HepG2 (cell line): ENCODE measurements at regions of chr11 and their contacts with region 1.

Region 1: GRCh38 chr11:61361686-61362541 is at the starts of genes CYB561A3 and TMEM138:
- DNase-seq: peak; percentile 89
- ATAC-seq: peak; percentile 96
- H3K4me3 ChIP-seq: peak within 1 kb of the TSS; percentile 74 to 80 (median 80)
- H3K27ac ChIP-seq: peak within 1 kb of the TSS; percentile 98
- H3K4me1 ChIP-seq: peaks cover 36% of the 10 kb centered on the region
- H3K27me3 ChIP-seq: no peaks in the 10 kb centered on the region; a peak in 1 of 5 replicates
- CTCF ChIP-seq: 0 out of 2 replicates have a peak, but pooled peaks have one; percentile 15
- EP300 ChIP-seq: no peak; a peak in 1 of 4 replicates
- POLR2A ChIP-seq: peak; percentile 87 to 92
- RAD21 ChIP-seq: no peak; the same call in 1 of the 2 replicates
- total RNA-seq, gene CYB561A3: 11.5 and 14.9 TPM in 2 replicates
- total RNA-seq, gene TMEM138: 29.7 and 43.5 TPM in 2 replicates

Region 2: DNA sequence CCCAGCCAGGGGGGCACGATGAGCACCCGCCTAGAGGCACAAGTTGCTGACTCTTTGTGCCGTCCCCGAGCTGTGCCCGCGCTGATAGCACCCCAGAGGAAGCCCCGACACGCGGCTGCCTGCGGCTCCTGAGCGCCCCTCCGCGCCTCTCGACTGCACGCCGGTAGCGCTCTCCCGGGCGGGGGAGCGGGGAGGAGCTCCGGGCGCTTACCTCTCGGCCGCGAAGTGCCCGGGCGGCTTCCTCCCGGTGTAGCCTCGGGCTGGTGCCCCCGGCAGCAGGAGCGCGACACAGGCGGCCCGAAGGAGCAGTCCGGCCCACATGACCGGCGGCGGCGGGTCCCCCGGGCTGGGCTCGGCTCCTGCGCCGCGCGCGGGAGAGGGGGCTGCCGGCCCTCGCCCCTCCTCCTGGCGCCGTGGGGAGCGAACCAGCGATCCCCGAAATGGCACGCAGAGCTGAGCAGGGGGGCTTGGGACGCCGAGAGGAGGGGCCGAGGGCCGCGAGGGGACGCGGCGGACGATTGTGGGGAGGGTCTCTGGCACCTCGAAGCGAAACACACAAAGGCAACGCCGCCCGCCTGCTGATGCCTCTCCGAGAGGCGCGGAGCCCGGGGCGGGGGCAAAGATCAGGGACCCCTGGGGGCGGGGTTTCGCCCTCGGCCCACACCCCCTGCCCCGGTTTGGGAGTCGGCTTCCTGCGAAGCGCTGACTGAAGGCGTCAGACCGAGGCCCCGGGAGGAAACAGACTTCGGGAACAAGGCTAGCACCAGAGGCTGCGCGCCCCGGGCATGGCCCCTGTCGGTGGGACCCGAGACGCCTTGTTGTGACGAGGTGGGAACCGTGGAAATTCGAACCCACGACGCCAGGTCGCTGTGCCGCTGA is 67.0 kb before region 1 on chr11 and contains the start of gene VWCE:
- CTCF ChIA-PET with region 1: no interaction called
- POLR2A ChIA-PET with region 1: interaction called, 17 read pairs
- in situ Hi-C with region 1: no loop called
- intact Hi-C with region 1: no loop called
- DNase-seq: peak; percentile 76
- ATAC-seq: peak; percentile 73
- H3K4me3 ChIP-seq: peak within 1 kb of the TSS; percentile 67 to 88 (median 83)
- H3K27ac ChIP-seq: peak within 1 kb of the TSS; percentile 94
- H3K4me1 ChIP-seq: peaks cover 74% of the 10 kb centered on the region
- H3K27me3 ChIP-seq: no peaks in the 10 kb centered on the region; a peak in 1 of 5 replicates
- CTCF ChIP-seq: peak; percentile 65
- EP300 ChIP-seq: no peak
- POLR2A ChIP-seq: peak; percentile 77 to 98
- RAD21 ChIP-seq: no peak; the same call in 1 of the 2 replicates
- total RNA-seq, gene VWCE: 10.4 and 27.6 TPM in 2 replicates

Region 3: GRCh38 chr11:61347916-61348461 is 13.9 kb before region 1 on chr11:
- CTCF ChIA-PET with region 1: no interaction called
- POLR2A ChIA-PET with region 1: interaction called, 26 read pairs
- in situ Hi-C with region 1: no loop called
- intact Hi-C with region 1: no loop called
- DNase-seq: no peak
- ATAC-seq: peak; percentile 23
- H3K4me3 ChIP-seq: no peak overlapping the region
- H3K27ac ChIP-seq: peak overlapping the region; percentile 22
- H3K4me1 ChIP-seq: no peaks in the 10 kb centered on the region
- H3K27me3 ChIP-seq: no peaks in the 10 kb centered on the region
- CTCF ChIP-seq: no peak
- EP300 ChIP-seq: no peak
- POLR2A ChIP-seq: peak in 1 of 2 experiments; percentile 25; a peak in 1 of 4 replicates
- RAD21 ChIP-seq: no peak

Region 4: GRCh38 chr11:61378713-61379313 is 16.9 kb after region 1 on chr11:
- CTCF ChIA-PET with region 1: no interaction called
- POLR2A ChIA-PET with region 1: interaction called, 14 read pairs
- in situ Hi-C with region 1: no loop called
- intact Hi-C with region 1: no loop called
- DNase-seq: peak; percentile 49
- ATAC-seq: peak; percentile 87
- H3K4me3 ChIP-seq: no peak overlapping the region
- H3K27ac ChIP-seq: peak overlapping the region; percentile 11
- H3K4me1 ChIP-seq: peaks cover 10% of the 10 kb centered on the region
- H3K27me3 ChIP-seq: no peaks in the 10 kb centered on the region
- CTCF ChIP-seq: no peak
- EP300 ChIP-seq: no peak
- POLR2A ChIP-seq: no peak
- RAD21 ChIP-seq: no peak

Region 5: GRCh38 chr11:61384271-61385242 is 22.6 kb after region 1 on chr11:
- CTCF ChIA-PET with region 1: no interaction called
- POLR2A ChIA-PET with region 1: interaction called, 14 read pairs
- in situ Hi-C with region 1: no loop called
- intact Hi-C with region 1: no loop called
- DNase-seq: peak; percentile 39
- ATAC-seq: peak; percentile 82
- H3K4me3 ChIP-seq: no peak overlapping the region
- H3K27ac ChIP-seq: no peak overlapping the region
- H3K4me1 ChIP-seq: peaks cover 9% of the 10 kb centered on the region
- H3K27me3 ChIP-seq: no peaks in the 10 kb centered on the region
- CTCF ChIP-seq: peak; percentile 83
- EP300 ChIP-seq: no peak
- POLR2A ChIP-seq: no peak
- RAD21 ChIP-seq: 0 out of 2 replicates have a peak, but pooled peaks have one; percentile 18

Region 6: GRCh38 chr11:61392981-61393595 is 31.2 kb after region 1 on chr11:
- CTCF ChIA-PET with region 1: no interaction called
- POLR2A ChIA-PET with region 1: interaction called, 64 read pairs
- in situ Hi-C with region 1: no loop called
- intact Hi-C with region 1: no loop called
- DNase-seq: no peak
- ATAC-seq: peak; percentile 56
- H3K4me3 ChIP-seq: peak overlapping the region; percentile 65 to 95 (median 90)
- H3K27ac ChIP-seq: peak overlapping the region; percentile 84
- H3K4me1 ChIP-seq: peaks cover 21% of the 10 kb centered on the region
- H3K27me3 ChIP-seq: no peaks in the 10 kb centered on the region
- CTCF ChIP-seq: peak; percentile 57
- EP300 ChIP-seq: no peak
- POLR2A ChIP-seq: no peak
- RAD21 ChIP-seq: no peak

Region 7: DNA sequence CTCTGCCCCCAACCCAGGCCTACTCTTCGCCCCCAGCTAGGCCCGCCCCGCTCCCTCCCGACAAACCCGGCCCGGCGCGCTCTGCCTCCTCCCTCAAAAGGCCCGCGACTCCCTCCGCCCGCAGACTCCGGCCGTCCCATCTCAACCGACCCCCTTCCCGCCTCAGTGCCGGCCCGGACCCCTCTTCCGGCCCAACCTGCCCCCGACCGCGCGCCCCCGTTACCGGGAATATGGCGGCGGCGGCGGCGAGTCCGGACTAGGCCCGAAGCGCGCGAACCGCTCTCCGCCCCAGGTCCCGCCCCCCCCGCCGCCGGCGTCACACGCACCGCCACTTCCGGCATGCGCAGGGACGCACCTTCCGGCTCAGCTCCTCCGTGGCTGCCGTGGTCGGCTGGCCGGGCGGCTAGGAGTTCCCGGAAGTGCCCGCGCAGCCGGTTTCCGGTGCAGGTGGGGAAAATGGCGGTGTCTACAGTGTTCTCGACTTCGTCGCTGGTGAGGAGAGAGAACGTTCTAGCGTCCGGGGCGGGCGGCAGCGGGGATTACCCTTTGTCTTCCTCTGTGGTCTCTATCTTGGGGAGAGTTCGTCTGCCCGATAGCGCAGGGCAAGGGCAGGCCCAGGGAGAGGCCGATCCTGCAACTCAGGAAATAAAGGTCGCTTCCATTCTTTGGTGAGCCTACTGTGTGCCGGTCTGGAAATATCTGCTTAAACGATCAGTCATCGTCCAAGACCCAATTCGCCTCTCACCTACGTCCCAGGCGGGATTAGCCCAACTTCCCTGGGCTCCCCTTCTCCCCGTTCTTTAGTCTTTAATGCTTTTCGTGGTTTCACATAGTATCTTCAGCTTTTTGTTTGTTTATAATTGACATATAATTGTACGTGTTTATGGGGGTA is 68.0 kb after region 1 on chr11 and contains the starts of genes CPSF7 and SDHAF2:
- CTCF ChIA-PET with region 1: no interaction called
- POLR2A ChIA-PET with region 1: interaction called, 29 read pairs
- in situ Hi-C with region 1: no loop called
- intact Hi-C with region 1: no loop called
- DNase-seq: peak; percentile 89
- ATAC-seq: peak; percentile 94
- H3K4me3 ChIP-seq: peak within 1 kb of the TSS; percentile 78 to 99 (median 84)
- H3K27ac ChIP-seq: peak within 1 kb of the TSS; percentile 100
- H3K4me1 ChIP-seq: peaks cover 62% of the 10 kb centered on the region
- H3K27me3 ChIP-seq: no peaks in the 10 kb centered on the region; a peak in 2 of 5 replicates
- CTCF ChIP-seq: no peak
- EP300 ChIP-seq: no peak
- POLR2A ChIP-seq: peak; percentile 76 to 84
- RAD21 ChIP-seq: no peak
- total RNA-seq, gene CPSF7: 29.4 and 34.1 TPM in 2 replicates
- total RNA-seq, gene SDHAF2: 44.2 and 53.3 TPM in 2 replicates